GM10248 (cell line): ENCODE measurements at regions of chr22 and their contacts with region 1.

Region 1: GRCh38 chr22:19629720-19630419 is 84.4 kb upstream of the SEPTIN5 start:
- DNase-seq: peak; percentile 91
- CTCF ChIP-seq: peak; percentile 94

Region 2: GRCh38 chr22:19143967-19144400 is 485.9 kb before region 1 on chr22:
- CTCF ChIA-PET with region 1: interaction called, 27 read pairs
- POLR2A ChIA-PET with region 1: no interaction called
- DNase-seq: no peak
- CTCF ChIP-seq: no peak

Region 3: GRCh38 chr22:19178656-19179496 is 451.0 kb before region 1 on chr22 and contains the start of gene SLC25A1:
- CTCF ChIA-PET with region 1: interaction called, 37 read pairs
- POLR2A ChIA-PET with region 1: no interaction called
- DNase-seq: peak; percentile 97
- CTCF ChIP-seq: no peak

Region 4: GRCh38 chr22:19291580-19292457 is 338.1 kb before region 1 on chr22 and contains the start of gene CLTCL1:
- CTCF ChIA-PET with region 1: interaction called, 54 read pairs
- POLR2A ChIA-PET with region 1: no interaction called
- DNase-seq: peak; percentile 99
- CTCF ChIP-seq: no peak

Region 5: GRCh38 chr22:19607192-19608002 is 22.5 kb before region 1 on chr22:
- CTCF ChIA-PET with region 1: interaction called, 12 read pairs
- POLR2A ChIA-PET with region 1: no interaction called
- DNase-seq: no peak
- CTCF ChIP-seq: no peak

Region 6: GRCh38 chr22:19619144-19620009 is 10.5 kb before region 1 on chr22:
- CTCF ChIA-PET with region 1: interaction called, 22 read pairs
- POLR2A ChIA-PET with region 1: no interaction called
- DNase-seq: peak; percentile 74
- CTCF ChIP-seq: no peak

Region 7: GRCh38 chr22:19844377-19845053 is 214.6 kb after region 1 on chr22:
- CTCF ChIA-PET with region 1: no interaction called
- POLR2A ChIA-PET with region 1: no interaction called
- DNase-seq: no peak
- CTCF ChIP-seq: no peak